Activated CD8-positive, alpha-beta memory T cell treated with anti-CD3 and anti-CD28 coated beads, Interleukin-2, amount 10 ng/mL, durations not matched to agents 7 days and 5 days (primary cell): ENCODE measurements at regions of chr5 and their contacts with region 1.

Region 1: GRCh38 chr5:59126708-59127573 is 544.1 kb downstream of the RAB3C start:
- DNase-seq: no peak
- ATAC-seq: peak; percentile 6
- H3K4me3 Mint-ChIP-seq: no peak overlapping the region
- H3K27ac Mint-ChIP-seq: no peak overlapping the region
- H3K4me1 Mint-ChIP-seq: peaks cover 13% of the 10 kb centered on the region
- H3K27me3 Mint-ChIP-seq: no peaks in the 10 kb centered on the region

Region 2: DNA sequence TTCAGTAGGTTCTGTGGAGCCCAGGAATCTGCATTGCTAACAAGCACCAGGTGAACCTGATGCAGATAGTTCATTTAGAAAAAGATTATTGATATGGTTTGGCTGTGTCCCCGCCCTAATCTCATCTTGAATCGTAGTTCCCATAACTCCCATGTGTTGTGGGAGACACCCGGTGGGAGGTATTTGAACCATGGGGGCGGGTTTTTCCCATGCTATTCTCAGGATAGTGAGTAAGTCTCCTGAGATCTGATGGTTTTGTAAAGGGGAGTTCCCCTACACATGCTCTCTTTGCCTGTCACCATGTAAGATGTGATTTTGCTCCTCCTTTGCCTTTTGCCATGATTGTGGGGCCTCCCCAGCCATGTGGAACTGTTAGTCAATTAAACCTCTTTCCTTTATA is 332.1 kb before region 1 on chr5:
- CTCF ChIA-PET with region 1: no interaction called
- DNase-seq: no peak
- ATAC-seq: no peak
- H3K4me3 Mint-ChIP-seq: no peak overlapping the region
- H3K27ac Mint-ChIP-seq: no peak overlapping the region
- H3K4me1 Mint-ChIP-seq: no peaks in the 10 kb centered on the region
- H3K27me3 Mint-ChIP-seq: peaks cover 25% of the 10 kb centered on the region

Region 3: DNA sequence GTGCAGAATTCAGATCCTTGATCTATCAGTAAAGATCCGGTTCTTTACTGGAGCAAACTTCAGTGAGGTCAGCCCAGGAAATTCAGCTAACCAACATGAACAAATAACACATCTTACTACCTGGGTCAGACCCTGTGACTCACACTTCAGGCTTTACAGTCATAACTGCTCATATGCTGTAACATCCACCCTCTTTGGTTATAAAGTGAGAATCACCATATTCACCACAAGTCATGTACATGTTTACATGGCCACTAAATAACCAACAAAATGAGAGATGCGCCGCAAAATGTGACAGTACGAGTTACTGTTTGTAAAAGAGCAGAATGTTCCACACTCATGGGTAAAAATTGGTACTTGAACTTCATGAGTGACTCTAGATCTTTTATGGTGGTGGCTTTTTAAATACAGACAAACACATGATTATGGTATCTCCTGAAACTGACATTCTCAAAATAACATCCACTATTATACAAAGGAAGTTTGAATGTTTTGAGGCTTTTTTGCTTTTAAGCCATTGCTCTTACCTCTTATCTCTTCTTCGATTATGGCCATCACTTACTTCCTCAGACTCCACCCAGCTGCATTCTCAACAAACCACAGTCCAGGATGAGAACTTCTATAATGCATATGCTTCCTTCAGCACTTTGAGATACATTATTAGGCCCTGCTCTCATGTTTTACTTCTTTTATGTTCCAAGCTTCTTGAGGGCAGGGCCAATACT is 27.5 kb before region 1 on chr5:
- CTCF ChIA-PET with region 1: interaction called, 27 read pairs
- DNase-seq: peak; percentile 89
- ATAC-seq: peak; percentile 98
- H3K4me3 Mint-ChIP-seq: peak overlapping the region; percentile 52
- H3K27ac Mint-ChIP-seq: peak overlapping the region; percentile 93
- H3K4me1 Mint-ChIP-seq: peaks cover 61% of the 10 kb centered on the region
- H3K27me3 Mint-ChIP-seq: no peaks in the 10 kb centered on the region

Region 4: GRCh38 chr5:59104400-59105127 is 22.4 kb before region 1 on chr5:
- CTCF ChIA-PET with region 1: interaction called, 27 read pairs
- DNase-seq: no peak
- ATAC-seq: no peak
- H3K4me3 Mint-ChIP-seq: no peak overlapping the region
- H3K27ac Mint-ChIP-seq: no peak overlapping the region
- H3K4me1 Mint-ChIP-seq: peaks cover 45% of the 10 kb centered on the region
- H3K27me3 Mint-ChIP-seq: no peaks in the 10 kb centered on the region